CD4-positive, alpha-beta memory T cell (primary cell): ENCODE measurements at regions of chr21 and their contacts with region 1.

Region 1: GRCh38 chr21:31397515-31397926 is 53.5 kb upstream of the TIAM1 start:
- DNase-seq: no peak
- H3K4me3 ChIP-seq: peak overlapping the region in 1 of 2 donors; percentile 13
- H3K4me3 Mint-ChIP-seq: peak overlapping the region in 6 of 8 donors; percentile 55 to 81 (median 66)
- H3K27ac ChIP-seq: no peak overlapping the region
- H3K27ac Mint-ChIP-seq: peak overlapping the region in 6 of 7 donors; percentile 55 to 84 (median 80)
- H3K4me1 ChIP-seq: peaks cover 36% of the 10 kb centered on the region
- H3K4me1 Mint-ChIP-seq: peaks cover 28 to 50% (median 38%) of the 10 kb centered on the region in 4 donors
- H3K27me3 ChIP-seq: no peaks in the 10 kb centered on the region
- H3K27me3 Mint-ChIP-seq: no peaks in the 10 kb centered on the region

Region 2: GRCh38 chr21:31354604-31355443 is 42.7 kb before region 1 on chr21:
- CTCF ChIA-PET with region 1: no interaction called
- POLR2A ChIA-PET with region 1: interaction called, 5 read pairs
- intact Hi-C with region 1: loop called (anchors 2 kb)
- DNase-seq: peak; percentile 74 to 92 (median 84)
- H3K4me3 ChIP-seq: no peak overlapping the region
- H3K4me3 Mint-ChIP-seq: peak overlapping the region in 7 of 8 donors; percentile 36 to 75 (median 64)
- H3K27ac ChIP-seq: peak overlapping the region; percentile 33
- H3K27ac Mint-ChIP-seq: peak overlapping the region; percentile 29 to 93 (median 90)
- H3K4me1 ChIP-seq: peaks cover 49% of the 10 kb centered on the region
- H3K4me1 Mint-ChIP-seq: peaks cover 29 to 60% (median 36%) of the 10 kb centered on the region in 4 donors
- H3K27me3 ChIP-seq: no peaks in the 10 kb centered on the region
- H3K27me3 Mint-ChIP-seq: no peaks in the 10 kb centered on the region

Region 3: DNA sequence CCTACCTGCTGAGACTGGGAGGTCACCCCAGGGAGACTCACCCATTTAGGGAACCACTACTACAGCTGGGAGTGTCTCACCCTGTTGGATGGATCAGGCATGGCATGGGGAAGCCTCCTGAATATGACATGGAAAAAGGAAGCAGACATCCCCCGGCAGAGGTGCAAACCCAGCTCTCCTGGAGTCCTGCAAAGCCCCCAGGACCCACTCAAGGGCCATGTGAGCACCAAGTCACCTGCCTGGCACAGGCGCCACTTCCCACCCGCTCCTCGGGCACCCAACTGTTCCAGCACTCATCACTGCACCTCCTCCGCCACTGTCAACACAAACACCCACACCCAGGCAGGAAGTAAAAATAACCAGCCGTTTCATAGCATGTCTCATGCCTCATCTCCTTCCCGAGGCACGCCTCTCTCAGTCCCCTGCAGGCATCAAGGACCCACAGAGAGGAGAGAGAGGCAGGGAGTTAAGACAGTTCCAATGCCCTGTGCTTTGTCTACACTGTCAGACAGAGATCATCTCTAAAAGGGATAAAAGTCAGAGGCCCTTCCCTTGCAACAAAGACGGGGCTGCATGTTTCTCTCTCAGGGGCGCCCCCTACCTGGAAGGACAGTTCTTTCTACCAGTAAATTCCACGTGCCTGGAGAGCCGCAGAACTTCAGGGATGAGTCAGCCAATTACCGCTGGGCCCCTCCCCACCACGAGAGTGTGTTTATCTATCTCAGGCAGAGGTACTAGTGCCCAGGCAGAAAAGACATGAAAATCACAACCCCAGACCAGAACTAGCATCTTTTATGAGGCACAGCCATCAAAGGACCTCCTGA is 111.9 kb after region 1 on chr21:
- CTCF ChIA-PET with region 1: no interaction called
- POLR2A ChIA-PET with region 1: no interaction called
- intact Hi-C with region 1: loop called (anchors 10 kb)
- DNase-seq: peak; percentile 57 to 74 (median 62)
- H3K4me3 ChIP-seq: no peak overlapping the region
- H3K4me3 Mint-ChIP-seq: peak overlapping the region; percentile 36 to 78 (median 55)
- H3K27ac ChIP-seq: no peak overlapping the region
- H3K27ac Mint-ChIP-seq: peak overlapping the region in 6 of 7 donors; percentile 0 to 87 (median 66)
- H3K4me1 ChIP-seq: peaks cover 15% of the 10 kb centered on the region
- H3K4me1 Mint-ChIP-seq: peaks cover 16 to 40% (median 28%) of the 10 kb centered on the region in 4 donors
- H3K27me3 ChIP-seq: no peaks in the 10 kb centered on the region
- H3K27me3 Mint-ChIP-seq: peaks cover 0 to 3% of the 10 kb centered on the region in 2 donors